Heart left ventricle (tissue), 16 donors: ENCODE measurements at regions of chr16 and their contacts with region 1.

Region 1: GRCh38 chr16:84617791-84618580 is at the start of gene COTL1:
- DNase-seq: peak; percentile 96 to 99 (median 97)
- ATAC-seq: peak; percentile 89 to 96 (median 93)
- H3K4me3 ChIP-seq: peak within 1 kb of the TSS; percentile 31 to 96 (median 74)
- H3K27ac ChIP-seq: peak within 1 kb of the TSS in 11 of 12 donors; percentile 37 to 87 (median 57)
- H3K4me1 ChIP-seq: peaks cover 0 to 57% (median 12%) of the 10 kb centered on the region in 12 donors
- H3K27me3 ChIP-seq: peaks cover 0 to 8% (median 0%) of the 10 kb centered on the region in 9 donors
- CTCF ChIP-seq: no peak
- POLR2A ChIP-seq: peak in 1 of 2 donors; percentile 54
- total RNA-seq, gene COTL1: 6.8 to 120 (median 11.0) TPM

Region 2: DNA sequence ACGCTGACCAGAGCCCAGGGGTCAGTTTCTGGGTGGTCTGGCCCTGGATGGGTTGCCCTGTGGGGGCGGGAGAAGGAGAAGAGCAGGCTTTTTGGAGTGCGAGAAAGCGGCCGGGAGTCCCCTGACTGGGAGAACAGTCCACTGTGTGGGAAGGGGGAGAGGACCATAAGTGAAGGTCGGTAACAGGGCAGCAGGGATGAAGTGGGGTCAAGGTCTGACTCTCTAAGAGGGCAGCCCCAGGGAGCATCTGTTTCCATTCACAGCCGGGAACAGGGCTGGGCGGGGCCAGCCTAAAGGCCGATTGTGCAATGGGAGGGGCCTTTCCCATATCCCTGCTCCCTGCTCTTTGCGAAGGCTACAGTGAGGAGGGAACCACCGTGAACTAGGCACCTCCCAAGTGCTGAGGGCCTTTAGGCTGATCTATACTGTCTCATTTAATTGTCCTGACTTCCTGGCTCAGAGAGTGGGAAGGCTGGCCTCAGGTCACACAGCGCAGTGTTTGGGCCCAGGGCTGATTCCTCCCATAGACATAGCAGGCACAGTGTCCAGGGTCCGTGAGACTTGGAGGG is 333.7 kb before region 1 on chr16:
- intact Hi-C with region 1: loop called in 1 of 10 experiments (anchors 10 kb)
- DNase-seq: peak; percentile 42 to 81 (median 73)
- ATAC-seq: peak; percentile 59 to 88 (median 84)
- H3K4me3 ChIP-seq: no peak overlapping the region
- H3K27ac ChIP-seq: peak overlapping the region in 11 of 12 donors; percentile 4 to 68 (median 56)
- H3K4me1 ChIP-seq: peaks cover 0 to 33% (median 18%) of the 10 kb centered on the region in 12 donors
- H3K27me3 ChIP-seq: peaks cover 0 to 11% (median 0%) of the 10 kb centered on the region in 9 donors
- CTCF ChIP-seq: no peak
- POLR2A ChIP-seq: no peak

Region 3: DNA sequence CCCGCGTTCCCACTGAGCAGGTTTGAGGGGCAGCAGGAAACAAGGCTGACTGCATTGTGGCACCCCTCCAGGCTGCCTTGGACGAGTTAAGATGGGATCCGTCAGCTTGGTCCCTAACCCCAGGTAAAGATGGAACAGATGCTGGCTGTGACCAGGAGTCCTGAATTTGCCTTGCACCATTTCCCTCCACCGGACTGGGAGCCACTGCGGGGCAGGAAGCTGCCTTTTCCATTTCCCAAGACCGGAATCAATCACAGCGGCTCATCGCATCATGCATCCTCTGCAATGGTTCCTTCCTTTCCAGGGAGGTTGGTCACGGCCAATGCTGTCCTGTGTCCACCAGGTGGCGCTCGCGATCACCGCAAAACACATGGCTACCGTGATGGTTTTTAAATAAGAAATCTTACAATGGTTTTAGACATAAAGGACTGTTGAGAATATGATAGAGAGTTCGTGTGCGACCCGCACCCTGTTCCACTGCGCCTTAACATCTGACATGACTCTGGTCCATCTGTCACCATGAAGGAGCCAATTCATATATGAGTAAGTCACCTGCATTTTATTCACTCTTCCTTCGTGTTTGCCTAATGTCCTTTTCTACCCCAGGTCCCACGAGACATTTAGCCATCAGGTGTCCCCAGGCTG is 106.7 kb before region 1 on chr16:
- intact Hi-C with region 1: loop called (anchors 1 to 2 kb)
- DNase-seq: peak; percentile 74 to 90 (median 82)
- ATAC-seq: peak; percentile 62 to 87 (median 82)
- H3K4me3 ChIP-seq: no peak overlapping the region
- H3K27ac ChIP-seq: no peak overlapping the region
- H3K4me1 ChIP-seq: peaks cover 0 to 42% (median 5%) of the 10 kb centered on the region in 12 donors
- H3K27me3 ChIP-seq: no peaks in the 10 kb centered on the region
- CTCF ChIP-seq: peak; percentile 94 to 99 (median 98)
- POLR2A ChIP-seq: peak in 1 of 2 donors; percentile 15

Region 4: GRCh38 chr16:84555418-84556195 is 62.4 kb before region 1 on chr16:
- intact Hi-C with region 1: loop called in 1 of 10 experiments (anchors 10 kb)
- DNase-seq: no peak
- ATAC-seq: peak in 1 of 4 donors; percentile 34
- H3K4me3 ChIP-seq: no peak overlapping the region
- H3K27ac ChIP-seq: no peak overlapping the region
- H3K4me1 ChIP-seq: peaks cover 0 to 1% (median 0%) of the 10 kb centered on the region in 12 donors
- H3K27me3 ChIP-seq: peaks cover 0 to 19% (median 0%) of the 10 kb centered on the region in 9 donors
- CTCF ChIP-seq: no peak
- POLR2A ChIP-seq: no peak

Region 5: GRCh38 chr16:84672276-84673202 is 54.6 kb after region 1 on chr16:
- intact Hi-C with region 1: loop called in 1 of 10 experiments (anchors 5 kb)
- DNase-seq: peak; percentile 71 to 91 (median 80)
- ATAC-seq: peak; percentile 70 to 90 (median 86)
- H3K4me3 ChIP-seq: no peak overlapping the region
- H3K27ac ChIP-seq: no peak overlapping the region
- H3K4me1 ChIP-seq: peaks cover 0 to 5% (median 0%) of the 10 kb centered on the region in 12 donors
- H3K27me3 ChIP-seq: no peaks in the 10 kb centered on the region
- CTCF ChIP-seq: peak in 11 of 12 donors; percentile 84 to 96 (median 91)
- POLR2A ChIP-seq: no peak

Region 6: DNA sequence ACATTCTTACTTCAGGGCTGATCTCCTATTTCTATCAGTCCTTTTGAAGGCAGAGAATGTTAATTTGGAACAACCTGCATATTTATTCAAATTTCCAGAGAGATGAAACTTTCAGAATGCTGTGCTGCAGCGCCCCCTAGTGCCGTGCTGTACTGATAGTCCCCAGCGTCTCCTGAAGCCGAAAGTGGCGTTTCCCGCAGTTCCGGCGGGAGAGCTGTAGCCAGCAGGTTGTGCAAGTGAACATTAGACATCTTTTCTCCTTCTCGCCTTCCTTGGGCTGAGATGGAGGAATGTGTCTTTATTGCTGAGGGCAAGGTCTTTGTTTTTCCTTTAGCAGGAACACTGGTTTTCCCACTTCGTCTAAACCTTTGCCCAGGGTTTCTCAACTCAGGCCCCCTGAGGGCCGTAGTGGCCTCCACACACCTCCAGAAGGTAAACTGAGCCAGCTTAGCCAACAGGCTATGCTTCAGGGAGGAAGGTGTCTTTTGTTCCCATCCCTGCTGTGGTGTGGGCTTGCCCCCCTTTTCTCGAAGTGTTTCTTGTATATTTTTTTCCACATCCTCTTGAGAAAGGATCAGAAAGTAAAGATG is 108.2 kb after region 1 on chr16:
- intact Hi-C with region 1: loop called in 7 of 10 experiments (anchors 1 to 5 kb)
- DNase-seq: peak; percentile 85 to 93 (median 88)
- ATAC-seq: peak; percentile 56 to 83 (median 80)
- H3K4me3 ChIP-seq: peak overlapping the region in 6 of 12 donors; percentile 6 to 35 (median 12)
- H3K27ac ChIP-seq: peak overlapping the region in 3 of 12 donors; percentile 11 to 76 (median 56)
- H3K4me1 ChIP-seq: peaks cover 6 to 88% (median 52%) of the 10 kb centered on the region in 12 donors
- H3K27me3 ChIP-seq: no peaks in the 10 kb centered on the region
- CTCF ChIP-seq: peak; percentile 86 to 99 (median 95)
- POLR2A ChIP-seq: no peak

Region 7: GRCh38 chr16:84738255-84739038 is 120.5 kb after region 1 on chr16:
- intact Hi-C with region 1: loop called in 2 of 10 experiments (anchors 5 kb)
- DNase-seq: peak; percentile 67 to 81 (median 76)
- ATAC-seq: peak; percentile 44 to 71 (median 66)
- H3K4me3 ChIP-seq: peak overlapping the region in 1 of 12 donors; percentile 4
- H3K27ac ChIP-seq: peak overlapping the region in 3 of 12 donors; percentile 30 to 45 (median 31)
- H3K4me1 ChIP-seq: peaks cover 0 to 76% (median 37%) of the 10 kb centered on the region in 12 donors
- H3K27me3 ChIP-seq: no peaks in the 10 kb centered on the region
- CTCF ChIP-seq: peak; percentile 81 to 96 (median 88)
- POLR2A ChIP-seq: no peak